Activated CD4-positive, alpha-beta memory T cell treated with anti-CD3 and anti-CD28 coated beads for 36 hours (primary cell): ENCODE measurements at regions of chr1 and their contacts with region 1.

Region 1: DNA sequence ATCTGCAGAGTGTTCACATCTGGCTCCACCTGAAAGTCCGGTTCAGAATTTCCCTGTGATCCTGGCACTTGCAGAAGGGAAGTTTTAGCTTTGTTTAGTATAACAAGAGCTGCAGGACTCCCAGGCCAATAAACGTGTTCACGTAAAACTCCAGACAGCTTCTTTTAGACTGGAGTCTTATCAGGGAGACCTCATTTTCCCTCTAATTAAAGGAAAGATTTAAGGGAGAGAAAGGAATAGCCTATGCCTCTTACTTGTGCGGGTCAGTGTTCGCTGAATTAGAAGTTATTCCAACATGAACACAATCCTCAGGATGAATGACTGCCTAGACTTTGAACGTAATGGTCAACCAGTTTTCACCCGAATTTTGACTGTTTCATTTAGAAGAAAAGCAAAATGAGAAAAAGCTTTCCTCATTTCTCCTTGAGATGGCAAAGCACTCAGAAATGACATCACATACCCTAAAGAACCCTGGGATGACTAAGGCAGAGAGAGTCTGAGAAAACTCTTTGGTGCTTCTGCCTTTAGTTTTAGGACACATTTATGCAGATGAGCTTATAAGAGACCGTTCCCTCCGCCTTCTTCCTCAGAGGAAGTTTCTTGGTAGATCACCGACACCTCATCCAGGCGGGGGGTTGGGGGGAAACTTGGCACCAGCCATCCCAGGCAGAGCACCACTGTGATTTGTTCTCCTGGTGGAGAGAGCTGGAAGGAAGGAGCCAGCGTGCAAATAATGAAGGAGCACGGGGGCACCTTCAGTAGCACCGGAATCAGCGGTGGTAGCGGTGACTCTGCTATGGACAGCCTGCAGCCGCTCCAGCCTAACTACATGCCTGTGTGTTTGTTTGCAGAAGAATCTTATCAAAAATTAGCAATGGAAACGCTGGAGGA is 202.1 kb upstream of the SGIP1 start:
- DNase-seq: peak; percentile 75
- H3K4me3 Mint-ChIP-seq: peak overlapping the region; percentile 93
- H3K27ac Mint-ChIP-seq: peak overlapping the region; percentile 96
- H3K4me1 Mint-ChIP-seq: peaks cover 48% of the 10 kb centered on the region
- H3K27me3 Mint-ChIP-seq: no peaks in the 10 kb centered on the region

Region 2: DNA sequence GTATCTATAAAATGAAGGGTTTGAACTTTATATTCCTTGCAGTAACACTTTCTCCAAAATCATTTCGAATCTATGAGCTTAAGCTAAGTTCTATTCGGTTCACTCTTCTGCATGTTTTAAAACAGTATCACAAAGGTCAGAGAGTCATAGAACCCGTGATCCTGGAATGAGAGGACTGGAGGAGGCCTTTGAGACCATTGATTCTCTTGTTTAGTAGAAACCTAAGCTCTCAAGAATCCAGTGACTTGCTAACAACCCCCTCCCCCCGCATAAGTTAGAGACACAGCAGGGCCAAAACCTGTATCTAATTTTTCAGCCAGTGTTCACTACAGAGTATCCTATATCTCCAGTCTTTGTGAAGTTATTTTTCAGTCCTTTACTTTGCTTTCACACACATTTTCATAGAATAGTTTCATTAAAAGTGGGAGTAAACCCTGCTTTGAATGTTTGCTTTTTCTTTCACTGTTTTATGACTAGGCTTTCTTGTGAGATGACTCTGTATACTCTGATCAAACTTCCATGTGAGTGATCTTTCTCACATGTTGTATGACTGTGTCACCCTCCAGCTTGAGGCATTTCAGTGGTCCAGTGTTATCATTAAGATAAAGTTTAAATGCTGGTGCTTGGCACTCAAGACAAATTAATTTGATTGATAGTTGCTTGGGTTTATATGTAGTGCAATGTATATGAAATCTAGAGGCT is 73.3 kb before region 1 on chr1:
- CTCF ChIA-PET with region 1: interaction called, 17 read pairs
- POLR2A ChIA-PET with region 1: interaction called, 6 read pairs
- intact Hi-C with region 1: loop called (anchors 1 kb)
- DNase-seq: no peak
- H3K4me3 Mint-ChIP-seq: no peak overlapping the region
- H3K27ac Mint-ChIP-seq: peak overlapping the region; percentile 64
- H3K4me1 Mint-ChIP-seq: peaks cover 85% of the 10 kb centered on the region
- H3K27me3 Mint-ChIP-seq: no peaks in the 10 kb centered on the region

Region 3: DNA sequence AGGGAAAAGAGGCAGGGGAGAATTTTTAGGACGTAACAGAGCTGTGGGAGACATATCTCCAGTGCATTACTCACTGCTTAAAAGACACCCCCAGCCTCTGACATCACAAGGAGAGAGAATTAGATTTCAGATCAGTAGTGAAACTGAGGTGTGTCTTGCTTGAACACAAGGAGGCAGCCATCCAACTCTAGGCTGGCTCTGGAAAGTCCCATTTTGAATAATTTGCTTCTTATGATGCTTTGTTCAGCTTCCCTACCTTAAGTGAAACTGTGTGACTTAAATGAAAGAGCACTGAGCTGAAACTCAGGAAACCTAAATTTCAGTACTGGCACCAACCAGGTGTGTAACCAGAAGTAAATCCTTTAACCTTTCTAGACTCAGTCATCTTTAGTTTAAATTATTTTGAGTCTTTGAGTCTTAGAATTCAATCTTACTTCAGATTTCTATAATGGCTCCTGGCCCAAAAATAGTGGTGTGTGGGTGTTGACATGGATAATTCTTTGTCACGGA is 49.5 kb before region 1 on chr1:
- CTCF ChIA-PET with region 1: interaction called, 14 read pairs
- POLR2A ChIA-PET with region 1: interaction called, 20 read pairs
- intact Hi-C with region 1: loop called (anchors 1 kb)
- DNase-seq: peak; percentile 80
- H3K4me3 Mint-ChIP-seq: no peak overlapping the region
- H3K27ac Mint-ChIP-seq: peak overlapping the region; percentile 76
- H3K4me1 Mint-ChIP-seq: peaks cover 87% of the 10 kb centered on the region
- H3K27me3 Mint-ChIP-seq: no peaks in the 10 kb centered on the region

Region 4: DNA sequence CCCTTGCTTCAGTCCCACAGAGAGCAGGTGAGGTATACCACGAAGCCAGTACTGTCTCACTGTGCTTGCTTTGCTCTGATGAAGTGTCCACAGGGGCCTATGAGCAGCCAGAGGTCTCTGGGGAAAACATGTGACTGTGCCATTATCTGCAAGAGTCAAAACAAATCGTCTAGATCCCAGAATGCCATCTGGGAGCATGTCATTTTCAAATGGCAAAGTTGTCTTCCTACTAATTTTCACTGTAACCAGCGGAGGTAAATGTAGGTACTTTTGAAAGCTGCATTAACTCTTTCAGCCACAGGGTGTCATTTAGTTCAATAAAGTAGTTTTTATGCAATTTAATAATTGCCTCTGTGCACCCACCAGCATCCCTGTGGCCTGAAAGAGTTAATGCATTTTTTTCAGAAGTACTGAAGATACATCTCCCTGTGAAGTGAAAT is 28.4 kb after region 1 on chr1:
- CTCF ChIA-PET with region 1: no interaction called
- POLR2A ChIA-PET with region 1: interaction called, 12 read pairs
- intact Hi-C with region 1: no loop called
- DNase-seq: no peak
- H3K4me3 Mint-ChIP-seq: no peak overlapping the region
- H3K27ac Mint-ChIP-seq: no peak overlapping the region
- H3K4me1 Mint-ChIP-seq: peaks cover 83% of the 10 kb centered on the region
- H3K27me3 Mint-ChIP-seq: no peaks in the 10 kb centered on the region

Region 5: DNA sequence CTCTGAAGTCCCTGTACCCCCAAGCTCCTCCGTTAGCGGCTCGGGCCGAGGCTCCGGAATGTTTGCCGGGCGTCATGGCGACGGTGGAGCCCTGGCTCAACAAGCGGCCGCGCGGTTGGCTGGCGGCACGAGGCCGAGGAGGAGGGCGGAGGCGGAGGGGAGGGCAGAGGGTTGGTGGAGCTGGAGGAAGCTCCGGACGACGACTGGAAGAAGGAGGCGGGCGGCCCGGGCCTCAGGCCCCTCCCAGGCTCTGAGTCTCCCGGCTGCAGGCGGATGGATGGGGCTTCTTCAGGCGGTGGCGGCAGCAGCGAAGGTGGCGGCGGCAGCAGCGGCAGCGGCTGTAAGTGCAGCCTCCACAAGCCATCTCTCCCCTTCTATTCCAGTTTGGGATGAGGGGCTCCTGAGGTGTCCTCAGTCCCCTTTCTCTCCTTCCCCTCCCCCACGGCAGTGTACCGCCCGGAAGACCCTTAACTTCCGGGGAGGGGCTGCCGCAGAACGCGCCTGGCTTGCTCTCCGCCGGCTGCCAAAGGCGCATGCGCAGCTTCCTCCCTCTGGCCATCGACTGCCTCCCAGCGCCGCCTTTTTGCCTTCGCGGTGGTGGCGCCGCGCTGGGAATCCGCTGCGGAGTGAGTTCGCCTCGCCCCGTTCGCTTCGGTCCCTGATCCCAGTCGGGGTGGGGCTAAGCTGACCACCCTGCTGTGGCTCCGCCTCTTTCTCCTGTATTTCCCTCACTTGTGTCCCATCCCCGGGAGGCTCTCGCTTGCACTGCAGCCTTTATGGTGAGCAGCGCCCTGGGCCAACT is 593.1 kb after region 1 on chr1 and contains the starts of genes DNAI4 and MIER1:
- CTCF ChIA-PET with region 1: no interaction called
- POLR2A ChIA-PET with region 1: no interaction called
- intact Hi-C with region 1: loop called (anchors 5 kb)
- DNase-seq: peak; percentile 99
- H3K4me3 Mint-ChIP-seq: peak within 1 kb of the TSS; percentile 97
- H3K27ac Mint-ChIP-seq: peak within 1 kb of the TSS; percentile 96
- H3K4me1 Mint-ChIP-seq: peaks cover 53% of the 10 kb centered on the region
- H3K27me3 Mint-ChIP-seq: no peaks in the 10 kb centered on the region
- total RNA-seq, gene DNAI4: 1.4 to 1.6 TPM
- total RNA-seq, gene MIER1: 54.7 to 58.8 TPM